ENCODE measurements at regions of chr5 and their contacts with region 1.

Region 1: DNA sequence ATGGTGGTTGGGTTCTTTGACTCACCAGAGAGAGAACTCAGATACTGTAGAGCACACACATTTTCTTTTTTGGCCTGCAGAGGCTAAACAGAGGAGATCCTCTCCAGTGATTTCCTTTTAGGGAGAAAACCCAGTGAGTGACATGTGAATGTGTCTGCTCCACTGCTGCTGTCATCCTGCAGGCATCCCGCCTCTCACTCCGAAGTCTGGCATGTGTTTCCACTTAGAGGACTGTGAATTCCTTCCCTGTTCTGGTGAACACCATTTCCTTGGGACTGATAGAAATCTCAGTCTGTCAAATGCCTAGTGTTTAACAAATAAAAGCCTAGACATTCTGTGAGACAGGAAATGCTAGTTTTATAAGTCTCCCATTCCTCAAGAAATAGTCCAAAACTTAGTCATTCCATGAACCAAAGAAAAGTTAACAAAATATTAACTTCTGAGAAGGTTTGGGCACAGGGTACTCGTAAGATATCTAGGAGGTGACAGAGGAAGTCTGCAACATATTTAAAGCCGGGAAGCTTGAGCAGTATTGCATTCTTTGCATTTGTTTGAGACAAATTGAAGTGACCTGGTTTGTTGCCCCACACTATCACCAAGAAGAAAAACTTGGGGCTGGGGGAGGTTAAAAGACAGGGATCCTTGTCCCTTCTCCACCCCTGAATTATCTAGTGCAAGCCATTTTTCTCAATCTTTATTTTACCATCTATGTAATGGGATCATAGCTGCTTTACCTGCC is 74.9 kb upstream of the NIPAL4 start:
- DNase-seq: no peak

Region 2: DNA sequence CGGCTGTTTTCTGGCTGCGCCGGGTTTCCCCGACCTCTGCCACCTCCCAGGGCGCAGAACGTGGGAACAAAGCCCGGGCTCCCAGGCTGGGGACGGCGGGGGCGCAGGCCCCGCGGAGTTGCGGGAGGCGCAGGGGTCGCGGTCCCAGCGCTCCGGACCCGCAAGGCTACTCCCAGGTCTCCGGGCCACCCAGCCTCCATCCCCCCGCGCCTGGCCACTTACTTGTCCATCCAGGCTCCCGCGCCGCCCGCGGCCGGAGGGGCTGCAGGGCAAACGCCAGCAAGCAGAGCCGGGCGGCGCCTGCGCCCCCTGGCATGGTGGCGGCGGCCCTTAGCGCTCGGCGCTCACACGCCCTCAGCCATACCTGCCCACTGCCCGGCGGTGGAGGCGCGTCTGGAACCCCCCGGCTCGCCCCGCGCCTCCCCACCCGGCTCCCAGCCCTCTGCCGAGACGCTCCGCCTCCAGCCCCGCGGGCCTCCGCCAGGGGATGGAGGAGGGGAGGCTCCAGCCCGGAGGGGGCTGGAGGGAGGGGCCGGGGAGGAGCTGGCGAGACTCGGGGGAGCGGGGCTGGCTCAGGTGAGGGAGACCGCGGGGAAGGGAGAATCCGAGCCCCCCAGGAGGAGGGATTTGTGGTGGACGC is 190.4 kb after region 1 on chr5 and contains the start of gene ADAM19:
- intact Hi-C with region 1: loop called (anchors 10 kb)
- DNase-seq: peak; percentile 84
- total RNA-seq, gene ADAM19: 97.1 TPM

Region 3: DNA sequence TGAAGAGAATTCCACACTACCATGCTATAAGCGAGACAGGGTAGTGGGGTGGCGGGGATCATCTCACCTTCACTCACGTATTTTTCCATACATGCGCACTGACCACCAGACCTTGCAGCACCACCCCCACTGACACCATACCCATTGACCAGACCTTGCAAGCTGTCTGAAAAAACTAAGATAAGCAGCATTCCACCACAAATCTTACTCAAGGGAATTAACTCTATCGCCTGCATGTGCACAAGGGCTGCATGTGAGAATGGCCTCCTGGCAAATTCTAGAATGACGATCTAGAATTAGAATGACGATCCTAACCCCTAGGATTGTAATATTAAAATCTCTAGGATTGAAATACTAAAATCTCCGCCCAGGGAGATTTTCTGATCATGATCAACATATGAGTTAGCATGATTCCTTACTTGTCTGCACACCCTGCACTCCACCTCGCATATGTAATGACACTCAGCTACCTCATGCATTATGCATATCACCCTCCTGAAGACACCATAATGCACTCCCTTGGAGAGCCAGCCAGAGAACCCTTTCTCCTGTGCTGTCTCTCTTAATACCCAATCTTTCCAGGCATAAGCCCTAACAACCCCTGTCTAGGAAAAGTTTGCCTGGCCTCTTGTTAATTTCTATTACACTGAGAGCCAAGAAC is 255.4 kb after region 1 on chr5:
- intact Hi-C with region 1: no loop called
- DNase-seq: no peak

Measured in cardiac septum (tissue), 1 donor.